GM12878 (cell line): ENCODE measurements at regions of chr3 and their contacts with region 1.

Region 1: GRCh38 chr3:15051531-15051930 is 13.6 kb downstream of the MRPS25 start:
- DNase-seq: no peak
- ATAC-seq: peak; percentile 88
- H3K4me3 ChIP-seq: no peak overlapping the region
- H3K27ac ChIP-seq: peak overlapping the region; percentile 71
- H3K4me1 ChIP-seq: peaks cover 45% of the 10 kb centered on the region
- H3K27me3 ChIP-seq: no peaks in the 10 kb centered on the region
- CTCF ChIP-seq: peak; percentile 76 to 90 (median 80)
- EP300 ChIP-seq: no peak
- POLR2A ChIP-seq: peak; percentile 34; the same call in 1 of the 2 replicates
- RAD21 ChIP-seq: peak; percentile 51

Region 2: GRCh38 chr3:15038306-15038705 is 13.2 kb before region 1 on chr3:
- CTCF ChIA-PET with region 1: interaction called, 16 read pairs
- POLR2A ChIA-PET with region 1: interaction called, 3 read pairs
- RAD21 ChIA-PET with region 1: no interaction called
- SMC1A ChIA-PET with region 1: interaction called, 5 read pairs
- in situ Hi-C with region 1: no loop called
- intact Hi-C with region 1: no loop called
- DNase-seq: no peak
- ATAC-seq: no peak
- H3K4me3 ChIP-seq: no peak overlapping the region
- H3K27ac ChIP-seq: no peak overlapping the region
- H3K4me1 ChIP-seq: no peaks in the 10 kb centered on the region
- H3K27me3 ChIP-seq: no peaks in the 10 kb centered on the region
- CTCF ChIP-seq: no peak
- EP300 ChIP-seq: no peak
- POLR2A ChIP-seq: no peak
- RAD21 ChIP-seq: no peak

Region 3: DNA sequence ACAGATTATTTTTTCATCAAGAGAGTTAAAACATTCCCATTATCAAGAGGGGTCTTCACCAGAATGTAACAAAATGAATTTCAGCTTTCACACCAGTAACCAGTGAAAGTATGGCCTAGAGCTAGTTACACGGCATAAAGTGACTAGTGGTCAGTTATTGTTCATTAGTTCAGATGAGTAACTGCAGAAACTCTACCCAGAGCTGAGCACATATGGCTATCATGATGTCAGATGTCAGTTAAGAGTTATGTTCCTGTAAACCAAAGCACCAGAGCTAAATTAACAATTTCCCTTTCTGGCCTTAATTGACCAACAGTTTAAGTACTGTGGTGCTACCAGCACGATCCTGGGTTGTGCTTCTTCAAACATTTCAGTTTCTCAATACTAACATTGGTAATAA is 20.2 kb after region 1 on chr3:
- CTCF ChIA-PET with region 1: interaction called, 50 read pairs
- POLR2A ChIA-PET with region 1: no interaction called
- RAD21 ChIA-PET with region 1: interaction called, 3 read pairs
- SMC1A ChIA-PET with region 1: interaction called, 22 read pairs
- in situ Hi-C with region 1: no loop called
- intact Hi-C with region 1: no loop called
- DNase-seq: no peak
- ATAC-seq: no peak
- H3K4me3 ChIP-seq: no peak overlapping the region
- H3K27ac ChIP-seq: no peak overlapping the region
- H3K4me1 ChIP-seq: no peaks in the 10 kb centered on the region
- H3K27me3 ChIP-seq: no peaks in the 10 kb centered on the region
- CTCF ChIP-seq: no peak
- EP300 ChIP-seq: no peak
- POLR2A ChIP-seq: no peak
- RAD21 ChIP-seq: no peak

Region 4: GRCh38 chr3:15098503-15099363 is 47.2 kb after region 1 on chr3 and contains the start of gene RBSN:
- CTCF ChIA-PET with region 1: interaction called, 8 read pairs
- POLR2A ChIA-PET with region 1: interaction called, 5 read pairs
- RAD21 ChIA-PET with region 1: no interaction called
- SMC1A ChIA-PET with region 1: interaction called, 11 read pairs
- in situ Hi-C with region 1: no loop called
- intact Hi-C with region 1: loop called (anchors 2 kb)
- DNase-seq: peak; percentile 75
- ATAC-seq: peak; percentile 90
- H3K4me3 ChIP-seq: peak within 1 kb of the TSS; percentile 98
- H3K27ac ChIP-seq: peak within 1 kb of the TSS; percentile 69
- H3K4me1 ChIP-seq: peaks cover 8% of the 10 kb centered on the region
- H3K27me3 ChIP-seq: no peaks in the 10 kb centered on the region
- CTCF ChIP-seq: no peak
- EP300 ChIP-seq: peak in 1 of 2 experiments; percentile 14; a peak in 3 of 4 replicates
- POLR2A ChIP-seq: peak; percentile 93
- RAD21 ChIP-seq: no peak
- polyA plus RNA-seq, gene RBSN: 2.0 to 2.1 TPM